Breast epithelium (tissue), 4 donors: ENCODE measurements at regions of chr9 and their contacts with region 1.

Region 1: GRCh38 chr9:114155263-114155972 is at the start of gene COL27A1:
- DNase-seq: peak; percentile 71 to 86
- H3K4me3 ChIP-seq: peak within 1 kb of the TSS; percentile 52 to 90 (median 66)
- H3K27ac ChIP-seq: peak within 1 kb of the TSS; percentile 57 to 75
- H3K4me1 ChIP-seq: peaks cover 0 to 6% of the 10 kb centered on the region in 2 donors
- H3K27me3 ChIP-seq: peaks cover 0 to 15% of the 10 kb centered on the region in 2 donors
- CTCF ChIP-seq: peak; percentile 73 to 92 (median 82)
- POLR2A ChIP-seq: no peak
- total RNA-seq, gene COL27A1: 3.5 to 22.0 (median 6.7) TPM

Region 2: GRCh38 chr9:112764344-112764743 is 1391.1 kb before region 1 on chr9:
- intact Hi-C with region 1: loop called (anchors 5 kb)
- DNase-seq: no peak
- H3K4me3 ChIP-seq: no peak overlapping the region
- H3K27ac ChIP-seq: no peak overlapping the region
- H3K4me1 ChIP-seq: no peaks in the 10 kb centered on the region
- H3K27me3 ChIP-seq: no peaks in the 10 kb centered on the region
- CTCF ChIP-seq: no peak
- POLR2A ChIP-seq: no peak

Region 3: DNA sequence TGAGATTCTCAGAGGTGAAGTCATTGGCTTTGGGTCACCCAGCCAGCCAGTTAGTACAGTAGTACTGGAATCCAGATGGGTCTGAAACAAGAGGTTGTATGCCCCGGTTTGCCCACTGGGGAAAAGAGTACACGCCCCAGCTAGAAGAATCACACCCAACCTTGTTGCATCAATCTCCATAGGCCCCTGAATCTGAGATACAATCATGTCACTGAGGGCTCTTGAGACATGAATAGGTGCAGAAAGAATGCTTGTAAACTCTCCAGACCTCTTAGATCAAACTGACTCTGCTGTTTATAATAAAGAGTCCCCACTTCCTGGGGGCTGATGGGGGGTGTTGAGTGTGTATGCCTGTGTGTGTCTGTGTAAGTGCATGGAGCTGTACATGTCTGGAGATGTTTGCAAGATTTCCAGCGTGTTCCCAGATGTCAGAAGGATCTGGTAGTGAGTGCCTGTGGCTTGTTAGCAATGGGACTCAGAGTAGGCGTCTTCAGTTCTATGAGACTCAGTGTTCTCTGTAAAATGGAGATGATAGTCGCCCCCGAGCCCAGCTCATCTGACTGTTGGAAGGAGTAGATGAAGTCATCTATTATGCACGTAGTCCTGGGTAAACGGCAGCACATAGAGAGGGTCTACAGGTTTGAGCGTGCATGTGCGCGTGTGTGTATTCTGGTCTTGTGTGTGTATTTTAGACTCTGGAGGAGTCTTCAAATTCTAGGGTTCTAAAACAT is 48.2 kb after region 1 on chr9:
- intact Hi-C with region 1: no loop called
- DNase-seq: no peak
- H3K4me3 ChIP-seq: no peak overlapping the region
- H3K27ac ChIP-seq: no peak overlapping the region
- H3K4me1 ChIP-seq: peaks cover 3 to 15% of the 10 kb centered on the region in 2 donors
- H3K27me3 ChIP-seq: no peaks in the 10 kb centered on the region
- CTCF ChIP-seq: no peak
- POLR2A ChIP-seq: no peak

Region 4: DNA sequence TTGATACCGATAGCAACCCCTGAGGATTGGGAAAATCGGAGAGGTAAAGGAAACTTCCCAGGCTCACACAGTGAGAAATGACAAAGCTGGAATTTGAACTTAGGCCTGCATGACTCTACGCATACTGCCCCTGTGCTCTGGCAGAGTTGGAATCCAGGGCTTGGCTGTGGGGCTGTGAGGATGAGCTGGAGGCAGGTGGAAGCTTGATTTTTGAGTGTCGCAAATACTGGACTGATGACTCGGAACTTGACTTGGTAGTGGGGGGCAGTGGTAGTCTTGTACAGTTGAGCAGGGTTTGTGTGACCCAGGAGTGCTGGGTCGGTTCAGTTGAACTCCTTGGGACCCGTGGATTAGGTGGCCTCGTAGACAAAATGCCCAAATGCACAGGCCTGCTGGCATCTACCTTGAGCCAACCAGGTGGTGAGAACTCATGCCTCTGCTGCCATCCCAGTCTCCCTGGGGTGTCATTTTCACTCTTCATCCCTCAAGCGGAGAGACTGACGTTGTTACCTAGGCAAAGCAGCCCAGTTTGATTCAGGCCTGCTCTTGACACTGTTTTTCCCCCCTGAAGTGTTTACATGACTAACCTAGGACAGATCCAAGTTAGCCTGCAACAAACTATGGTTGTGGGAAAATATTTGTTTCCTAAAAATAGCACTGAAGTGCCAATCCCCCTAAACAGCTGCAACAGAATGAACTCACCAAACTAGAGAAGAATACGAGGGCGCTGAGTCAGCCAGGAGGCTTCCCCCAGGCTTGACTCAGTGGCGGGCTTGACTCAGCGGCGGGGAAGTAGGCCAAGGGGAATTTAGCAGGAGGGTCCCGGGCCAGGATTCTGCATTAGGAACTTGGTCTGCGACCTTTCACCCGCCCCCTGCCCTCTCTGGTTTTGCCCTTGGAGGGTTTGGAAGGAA is 121.7 kb after region 1 on chr9:
- intact Hi-C with region 1: loop called (anchors 5 kb)
- DNase-seq: peak in 1 of 2 donors; percentile 44
- H3K4me3 ChIP-seq: no peak overlapping the region
- H3K27ac ChIP-seq: no peak overlapping the region
- H3K4me1 ChIP-seq: no peaks in the 10 kb centered on the region
- H3K27me3 ChIP-seq: no peaks in the 10 kb centered on the region
- CTCF ChIP-seq: no peak
- POLR2A ChIP-seq: no peak

Region 5: DNA sequence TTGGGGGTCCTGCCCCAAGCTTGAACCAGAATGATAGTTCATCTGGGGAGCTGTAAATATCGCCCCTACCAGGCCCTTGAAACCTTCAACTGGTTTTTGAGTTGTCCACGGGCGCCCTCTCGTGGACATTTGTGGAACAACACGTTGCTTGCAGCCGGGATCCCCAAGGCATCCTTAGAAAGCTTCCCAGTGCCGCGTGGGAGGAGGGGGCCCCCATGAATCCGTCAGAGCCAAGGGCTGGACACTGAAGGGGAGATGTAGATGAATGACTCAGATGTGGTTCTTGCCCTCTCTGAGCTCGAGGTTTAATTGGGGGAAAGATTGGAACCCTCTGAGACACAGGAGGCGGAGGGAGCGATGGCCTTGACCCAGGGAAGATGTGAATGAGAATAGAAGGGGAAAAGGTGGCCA is 135.7 kb after region 1 on chr9:
- intact Hi-C with region 1: loop called (anchors 5 kb)
- DNase-seq: peak; percentile 45 to 78
- H3K4me3 ChIP-seq: no peak overlapping the region
- H3K27ac ChIP-seq: no peak overlapping the region
- H3K4me1 ChIP-seq: no peaks in the 10 kb centered on the region
- H3K27me3 ChIP-seq: no peaks in the 10 kb centered on the region
- CTCF ChIP-seq: peak; percentile 89 to 92 (median 92)
- POLR2A ChIP-seq: no peak